ENCODE measurements at regions of chr2 and their contacts with region 1.

Region 1: GRCh38 chr2:10043906-10044601 is 704 bp downstream of the KLF11 start:
- DNase-seq: peak; percentile 100
- ATAC-seq: peak; percentile 73

Region 2: GRCh38 chr2:9813312-9814133 is 230.5 kb before region 1 on chr2:
- intact Hi-C with region 1: loop called (anchors 5 kb)
- DNase-seq: peak; percentile 81
- ATAC-seq: peak; percentile 95

Region 3: DNA sequence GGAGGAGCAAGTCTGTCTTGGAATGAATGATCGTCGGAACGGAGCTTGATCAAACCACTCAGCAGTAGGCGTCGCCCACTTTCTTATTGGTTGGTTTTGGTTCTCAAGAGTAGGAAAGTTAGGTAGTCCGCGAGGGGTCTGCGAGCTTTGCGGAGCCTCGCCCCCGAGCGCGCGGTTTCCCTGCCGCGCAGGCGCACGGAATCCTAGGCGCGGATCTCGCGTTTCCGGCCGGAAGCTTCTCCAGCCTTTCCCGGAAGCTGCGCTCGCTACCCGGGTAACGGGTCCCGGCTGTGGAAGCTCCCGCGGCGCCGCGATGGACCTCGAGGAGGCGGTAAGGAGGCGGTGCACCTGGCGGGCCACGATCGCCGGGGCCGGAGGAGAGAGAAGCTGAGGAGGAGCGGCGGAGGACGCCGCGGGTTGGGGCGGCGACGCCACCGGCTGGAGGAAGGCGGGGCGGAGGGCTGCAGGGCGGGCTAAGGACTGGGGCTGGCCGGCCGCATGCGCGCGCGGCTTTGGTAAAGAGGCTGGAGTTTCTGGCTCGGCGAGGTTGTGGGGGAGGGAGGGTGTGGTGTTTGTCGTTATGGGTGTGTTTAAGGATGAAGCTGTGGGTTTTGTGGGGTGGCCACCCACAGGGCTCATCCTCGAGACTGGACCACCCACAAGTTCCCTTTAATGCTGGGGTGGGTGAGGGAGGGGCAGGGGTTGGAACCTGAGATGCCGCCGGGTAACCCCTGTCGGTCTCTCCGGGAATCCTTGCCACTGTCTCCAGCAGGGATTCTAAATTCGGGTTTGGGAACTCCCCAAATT is 200.6 kb before region 1 on chr2 and contains the start of gene TAF1B:
- intact Hi-C with region 1: no loop called
- DNase-seq: peak; percentile 91
- ATAC-seq: peak; percentile 98
- total RNA-seq, gene TAF1B: 6.1 TPM

Region 4: DNA sequence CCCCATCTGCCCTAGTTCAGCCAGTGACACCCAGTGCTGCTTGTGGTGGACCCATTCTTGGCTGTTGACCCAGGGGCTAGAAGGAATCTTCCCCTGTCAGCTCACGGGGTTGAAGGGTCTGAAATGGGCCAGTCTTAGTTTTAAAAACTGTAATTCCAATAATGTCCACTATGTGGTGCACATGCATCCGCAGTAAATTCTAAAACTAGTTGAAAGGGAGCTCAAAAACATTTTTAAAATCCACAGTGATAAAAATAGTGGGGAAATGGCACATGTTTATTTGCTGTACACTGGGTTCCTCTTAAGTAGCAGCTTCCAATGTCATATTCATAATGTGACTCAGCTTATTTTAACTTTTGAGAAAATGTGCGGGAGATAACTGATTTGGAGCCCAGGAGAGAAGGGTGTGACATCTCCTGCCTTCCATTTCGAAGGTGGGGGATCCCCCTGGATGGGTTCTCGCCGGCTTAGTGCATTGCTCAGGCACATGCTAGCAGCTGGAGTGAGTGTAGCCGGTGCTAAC is 59.8 kb before region 1 on chr2:
- intact Hi-C with region 1: loop called (anchors 5 kb)
- DNase-seq: no peak
- ATAC-seq: peak; percentile 77

Region 5: GRCh38 chr2:9990735-9991134 is 53.3 kb before region 1 on chr2:
- intact Hi-C with region 1: loop called (anchors 5 kb)
- DNase-seq: peak; percentile 76
- ATAC-seq: peak; percentile 62

Region 6: GRCh38 chr2:10009811-10010292 is 34.2 kb before region 1 on chr2:
- intact Hi-C with region 1: loop called (anchors 5 kb)
- DNase-seq: peak; percentile 94
- ATAC-seq: peak; percentile 82